Activated naive CD4-positive, alpha-beta T cell treated with anti-CD3 and anti-CD28 coated beads for 36 hours (primary cell): ENCODE measurements at regions of chr1 and their contacts with region 1.

Region 1: DNA sequence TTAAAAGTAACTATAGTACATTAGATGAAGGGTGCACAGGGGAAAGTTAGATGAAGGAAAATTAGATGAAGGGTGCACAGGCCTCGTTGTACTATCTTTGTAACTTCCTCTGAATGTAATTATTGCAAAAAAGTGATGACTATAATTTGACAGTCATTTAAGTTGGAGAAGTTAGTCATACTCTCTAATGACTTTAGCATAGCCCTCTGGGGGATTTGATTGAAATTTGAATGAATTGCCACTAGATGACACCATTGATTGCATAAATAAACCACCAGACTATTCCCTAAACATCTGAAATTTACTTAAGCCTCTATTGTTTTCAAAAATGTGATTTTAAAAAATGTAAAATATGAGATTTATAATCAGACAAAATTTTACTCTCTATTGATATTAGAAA is 102.6 kb downstream of the TPR start:
- DNase-seq: no peak
- H3K4me3 Mint-ChIP-seq: no peak overlapping the region
- H3K27ac Mint-ChIP-seq: peak overlapping the region; percentile 65
- H3K4me1 Mint-ChIP-seq: peaks cover 40% of the 10 kb centered on the region
- H3K27me3 Mint-ChIP-seq: no peaks in the 10 kb centered on the region

Region 2: DNA sequence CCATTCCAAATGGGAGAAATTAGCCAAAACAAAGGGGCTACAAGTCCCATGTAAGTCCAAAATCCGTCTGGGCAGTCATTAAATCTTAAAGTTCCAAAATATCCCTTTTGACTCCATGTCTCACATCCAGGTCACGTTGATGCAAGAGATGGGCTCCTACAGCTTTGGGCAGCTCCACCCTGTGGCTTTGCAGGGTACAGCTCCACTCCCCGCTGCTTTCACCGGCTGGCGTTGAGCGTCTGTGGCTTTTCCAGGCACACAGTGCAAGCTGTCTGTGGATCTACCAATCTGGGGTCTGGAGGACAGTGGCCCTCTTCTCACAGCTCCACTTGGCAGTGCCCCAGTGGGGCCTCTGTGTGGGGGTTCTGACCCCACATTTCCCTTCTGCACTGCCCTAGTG is 27.7 kb before region 1 on chr1:
- CTCF ChIA-PET with region 1: no interaction called
- intact Hi-C with region 1: no loop called
- DNase-seq: peak; percentile 15
- H3K4me3 Mint-ChIP-seq: no peak overlapping the region
- H3K27ac Mint-ChIP-seq: no peak overlapping the region
- H3K4me1 Mint-ChIP-seq: peaks cover 3% of the 10 kb centered on the region
- H3K27me3 Mint-ChIP-seq: no peaks in the 10 kb centered on the region

Region 3: DNA sequence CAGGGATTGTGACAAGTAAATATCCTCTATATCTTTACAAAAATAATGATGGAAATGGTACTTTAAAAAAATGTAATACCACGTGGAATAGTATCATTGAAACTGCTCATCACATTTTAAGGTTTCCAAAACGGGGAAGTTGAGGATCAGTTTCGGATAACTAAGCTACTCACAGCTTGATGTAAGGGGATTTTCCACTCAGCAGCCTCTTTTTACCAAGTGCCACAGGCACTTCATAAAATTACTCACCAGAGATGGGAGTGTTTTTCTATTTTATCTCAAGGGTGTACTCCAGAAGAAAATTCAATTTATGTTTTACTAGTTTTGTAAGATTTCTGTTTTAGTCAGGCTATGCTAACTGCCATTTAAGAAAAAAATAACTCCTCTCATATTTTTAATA is 10.9 kb after region 1 on chr1:
- CTCF ChIA-PET with region 1: interaction called, 22 read pairs
- intact Hi-C with region 1: no loop called
- DNase-seq: peak; percentile 46
- H3K4me3 Mint-ChIP-seq: peak overlapping the region; percentile 48
- H3K27ac Mint-ChIP-seq: peak overlapping the region; percentile 99
- H3K4me1 Mint-ChIP-seq: peaks cover 74% of the 10 kb centered on the region
- H3K27me3 Mint-ChIP-seq: no peaks in the 10 kb centered on the region

Region 4: DNA sequence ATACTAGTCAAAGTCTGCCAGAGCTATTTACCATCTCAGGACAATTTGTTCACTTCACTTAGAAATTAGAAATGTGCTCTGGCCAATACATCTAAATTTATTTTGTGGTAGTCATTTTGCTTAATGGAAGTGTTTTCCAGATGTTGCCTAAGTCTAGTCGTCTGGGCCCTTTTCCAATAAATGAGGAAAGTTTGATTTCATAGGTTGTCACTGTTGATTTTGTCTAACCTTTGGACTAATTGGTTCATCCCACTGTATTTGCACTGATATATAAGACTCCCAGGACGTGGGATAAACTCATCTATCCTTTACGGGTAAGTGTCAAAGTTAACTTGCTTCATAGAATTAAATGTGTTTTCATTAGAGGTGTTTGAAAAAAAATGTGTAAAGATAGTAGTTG is 23.5 kb after region 1 on chr1:
- CTCF ChIA-PET with region 1: interaction called, 21 read pairs
- intact Hi-C with region 1: loop called (anchors 1 kb)
- DNase-seq: no peak
- H3K4me3 Mint-ChIP-seq: peak within 1 kb of the TSS; percentile 42
- H3K27ac Mint-ChIP-seq: peak within 1 kb of the TSS; percentile 99
- H3K4me1 Mint-ChIP-seq: peaks cover 69% of the 10 kb centered on the region
- H3K27me3 Mint-ChIP-seq: no peaks in the 10 kb centered on the region

Region 5: DNA sequence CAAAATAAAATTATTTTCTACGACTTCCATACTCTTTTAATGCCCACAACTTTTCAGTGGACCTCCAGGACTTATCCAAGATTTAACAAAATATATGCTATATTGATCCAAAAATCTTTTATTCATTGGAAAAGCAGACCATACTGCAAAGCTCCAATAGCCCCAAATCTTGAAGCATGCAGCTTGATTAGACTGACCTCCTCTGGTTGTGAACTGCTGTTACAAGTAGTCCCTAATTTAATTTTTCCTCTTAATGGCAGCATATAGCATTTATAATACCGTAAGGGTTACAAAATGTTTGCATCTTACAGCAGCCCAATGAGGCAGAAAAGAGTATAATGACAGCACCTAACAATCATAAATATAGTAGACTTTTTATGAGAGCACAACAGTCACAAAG is 52.8 kb after region 1 on chr1:
- CTCF ChIA-PET with region 1: interaction called, 31 read pairs
- intact Hi-C with region 1: loop called (anchors 1 kb)
- DNase-seq: no peak
- H3K4me3 Mint-ChIP-seq: no peak overlapping the region
- H3K27ac Mint-ChIP-seq: no peak overlapping the region
- H3K4me1 Mint-ChIP-seq: peaks cover 39% of the 10 kb centered on the region
- H3K27me3 Mint-ChIP-seq: no peaks in the 10 kb centered on the region

Region 6: GRCh38 chr1:186482661-186483255 is 210.3 kb after region 1 on chr1:
- CTCF ChIA-PET with region 1: no interaction called
- intact Hi-C with region 1: loop called (anchors 2 kb)
- DNase-seq: peak; percentile 71
- H3K4me3 Mint-ChIP-seq: no peak overlapping the region
- H3K27ac Mint-ChIP-seq: no peak overlapping the region
- H3K4me1 Mint-ChIP-seq: no peaks in the 10 kb centered on the region
- H3K27me3 Mint-ChIP-seq: no peaks in the 10 kb centered on the region

Region 7: DNA sequence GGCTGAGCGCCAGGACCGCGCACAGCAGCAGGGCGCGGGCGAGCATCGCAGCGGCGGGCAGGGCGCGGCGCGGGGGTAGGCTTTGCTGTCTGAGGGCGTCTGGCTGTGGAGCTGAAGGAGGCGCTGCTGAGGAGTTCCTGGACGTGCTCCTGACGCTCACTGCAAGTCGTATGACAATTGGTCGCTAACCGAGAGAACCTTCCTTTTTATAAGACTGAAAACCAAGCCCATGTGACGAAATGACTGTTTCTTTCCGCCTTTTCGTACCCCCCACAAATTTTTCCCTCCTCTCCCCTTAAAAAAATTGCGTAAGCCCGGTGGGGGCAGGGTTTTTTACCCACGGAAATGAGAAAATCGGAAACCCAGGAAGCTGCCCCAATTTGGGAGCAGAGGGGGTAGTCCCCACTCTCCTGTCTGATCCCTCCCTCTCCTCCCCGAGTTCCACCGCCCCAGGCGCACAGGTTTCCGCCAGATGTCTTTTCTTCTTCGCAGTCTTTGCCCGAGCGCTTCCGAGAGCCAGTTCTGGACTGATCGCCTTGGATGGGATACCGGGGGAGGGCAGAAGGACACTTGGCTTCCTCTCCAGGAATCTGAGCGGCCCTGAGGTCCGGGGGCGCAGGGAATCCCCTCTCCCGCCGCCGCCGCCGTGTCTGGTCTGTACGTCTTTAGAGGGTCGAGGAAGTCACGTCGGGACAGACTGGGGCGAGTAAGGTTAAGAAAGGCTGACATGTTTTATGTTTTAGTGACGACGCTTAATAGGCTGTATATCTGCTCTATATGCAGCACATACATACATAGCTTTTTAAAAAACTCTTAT is 408.0 kb after region 1 on chr1 and contains the start of gene PTGS2:
- CTCF ChIA-PET with region 1: no interaction called
- intact Hi-C with region 1: loop called (anchors 2 kb)
- DNase-seq: peak; percentile 65
- H3K4me3 Mint-ChIP-seq: peak within 1 kb of the TSS; percentile 78
- H3K27ac Mint-ChIP-seq: no peak within 1 kb of the TSS
- H3K4me1 Mint-ChIP-seq: peaks cover 10% of the 10 kb centered on the region
- H3K27me3 Mint-ChIP-seq: peaks cover 52% of the 10 kb centered on the region
- total RNA-seq, gene PTGS2: 1.8 to 2.0 TPM